A549 (cell line): ENCODE measurements at regions of chr13 and their contacts with region 1.

Region 1: GRCh38 chr13:23466144-23467002 is 32.9 kb upstream of the SACS start:
- DNase-seq: peak; percentile 41 to 76
- ATAC-seq: peak; percentile 94 to 95
- H3K4me3 ChIP-seq: peak overlapping the region; percentile 49
- H3K27ac ChIP-seq: peak overlapping the region; percentile 79 to 91
- H3K4me1 ChIP-seq: 0 out of 3 replicates have a peak, but pooled peaks cover 3% of the 10 kb centered on the region
- CTCF ChIP-seq: peak; percentile 50
- EP300 ChIP-seq: no peak
- POLR2A ChIP-seq: no peak
- RAD21 ChIP-seq: peak; percentile 69 to 74

Region 2: GRCh38 chr13:23330356-23330755 is 136.0 kb before region 1 on chr13:
- CTCF ChIA-PET with region 1: no interaction called
- POLR2A ChIA-PET with region 1: no interaction called
- DNase-seq: no peak
- ATAC-seq: no peak
- H3K4me3 ChIP-seq: no peak overlapping the region
- H3K27ac ChIP-seq: no peak overlapping the region
- H3K4me1 ChIP-seq: no peaks in the 10 kb centered on the region
- CTCF ChIP-seq: no peak
- EP300 ChIP-seq: no peak
- POLR2A ChIP-seq: no peak
- RAD21 ChIP-seq: no peak

Region 3: GRCh38 chr13:23447927-23448326 is 18.4 kb before region 1 on chr13:
- CTCF ChIA-PET with region 1: no interaction called
- POLR2A ChIA-PET with region 1: no interaction called
- DNase-seq: no peak
- ATAC-seq: no peak
- H3K4me3 ChIP-seq: no peak overlapping the region
- H3K27ac ChIP-seq: no peak overlapping the region
- H3K4me1 ChIP-seq: no peaks in the 10 kb centered on the region
- CTCF ChIP-seq: no peak
- EP300 ChIP-seq: no peak
- POLR2A ChIP-seq: no peak
- RAD21 ChIP-seq: no peak

Region 4: DNA sequence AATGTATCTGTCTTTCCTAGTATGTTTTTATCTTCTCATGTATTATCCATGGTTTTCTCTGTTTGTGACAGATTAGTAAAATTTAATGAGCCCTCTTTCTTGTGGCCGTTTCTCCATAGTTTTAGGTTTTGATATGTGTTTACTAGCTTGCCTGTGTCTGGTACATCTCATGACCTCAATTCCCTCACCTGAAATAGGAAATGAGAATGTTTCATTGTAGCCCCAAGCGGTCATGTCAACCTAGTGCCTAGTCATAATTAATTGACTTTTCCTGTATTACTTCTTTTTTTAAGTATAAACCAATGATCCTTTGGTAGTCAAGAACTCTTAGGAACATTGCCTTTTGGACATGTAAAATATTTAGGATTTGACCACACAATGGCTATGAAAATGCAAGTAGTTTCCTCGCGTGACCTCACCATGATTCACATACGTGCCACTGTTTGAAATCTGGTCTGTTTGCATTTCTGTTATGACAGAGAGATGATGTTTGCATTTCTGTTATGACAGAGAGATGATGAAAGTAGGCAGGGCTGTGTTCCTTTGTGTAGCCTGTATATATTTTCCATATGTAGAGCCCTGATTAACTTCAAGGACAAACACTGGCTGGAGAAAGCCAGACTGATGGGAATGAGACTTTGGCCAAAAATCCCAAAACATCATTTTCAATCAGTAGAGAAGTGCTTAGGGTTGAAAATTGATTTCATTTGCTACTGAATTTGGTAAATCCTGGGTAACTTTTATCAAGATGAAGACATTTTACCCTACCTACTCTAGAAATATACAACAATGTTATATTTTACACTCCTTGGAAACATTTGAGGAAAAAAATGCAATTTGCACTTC is 208.6 kb after region 1 on chr13:
- CTCF ChIA-PET with region 1: no interaction called
- POLR2A ChIA-PET with region 1: no interaction called
- DNase-seq: peak; percentile 57 to 60
- ATAC-seq: peak; percentile 73 to 90; a peak in 5 of 6 replicates
- H3K4me3 ChIP-seq: no peak overlapping the region
- H3K27ac ChIP-seq: peak overlapping the region; percentile 38 to 56; a peak in 1 of 6 replicates
- H3K4me1 ChIP-seq: peaks cover 46% of the 10 kb centered on the region
- CTCF ChIP-seq: no peak
- EP300 ChIP-seq: 0 out of 5 replicates have a peak, but pooled peaks of 1 of the 2 experiments have one; percentile 25
- POLR2A ChIP-seq: no peak
- RAD21 ChIP-seq: no peak

Region 5: DNA sequence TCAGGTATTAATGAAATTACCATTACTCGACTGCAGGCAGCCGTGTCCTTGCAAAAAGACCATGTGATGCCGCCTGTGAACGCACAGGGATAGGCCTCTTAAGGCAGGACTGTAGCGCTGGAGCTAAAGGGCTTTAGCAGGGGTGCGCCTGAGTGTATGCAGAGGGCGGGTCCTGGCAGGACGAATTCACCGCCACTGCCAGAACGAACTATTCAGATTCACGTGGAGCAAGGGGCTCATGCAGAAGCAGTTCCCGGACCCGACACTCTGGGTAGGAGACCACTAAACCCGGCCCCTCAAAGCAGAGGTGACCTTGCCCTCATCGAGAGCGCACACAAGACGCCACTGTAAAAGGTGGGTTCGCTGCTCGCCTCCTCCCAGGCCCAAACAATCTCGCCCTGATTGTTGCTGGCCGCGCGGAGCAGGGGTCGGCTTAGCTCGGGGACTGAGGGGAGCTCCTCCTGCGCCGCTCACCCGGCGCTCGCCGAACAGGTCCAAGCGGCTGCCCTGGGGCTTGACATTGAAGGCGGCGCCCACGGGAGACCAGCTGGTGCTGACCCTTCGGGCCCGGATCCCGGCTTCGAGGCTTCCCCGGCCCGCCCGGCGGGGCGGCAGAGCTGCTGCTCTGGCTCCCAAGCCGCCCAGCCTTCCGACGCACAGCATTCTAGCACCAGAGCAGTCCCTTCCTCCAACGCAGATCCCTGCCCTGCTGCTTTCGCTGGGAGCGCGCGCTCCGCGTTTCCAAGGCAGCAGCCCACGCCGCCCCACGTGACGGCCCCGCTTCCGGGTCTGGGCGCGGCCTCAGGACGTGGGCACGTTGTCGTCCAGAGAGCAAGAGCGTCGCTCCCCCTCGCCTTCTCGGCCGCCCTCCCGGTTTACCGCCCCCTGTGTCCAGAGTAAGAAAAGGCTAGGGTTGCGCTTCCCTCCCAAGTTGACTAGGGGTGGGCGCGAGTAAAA is 422.6 kb after region 1 on chr13 and contains the start of gene MIPEP:
- CTCF ChIA-PET with region 1: interaction called, 22 read pairs
- POLR2A ChIA-PET with region 1: no interaction called
- DNase-seq: peak; percentile 83 to 93
- ATAC-seq: peak; percentile 94 to 96
- H3K4me3 ChIP-seq: peak within 1 kb of the TSS; percentile 82
- H3K27ac ChIP-seq: peak within 1 kb of the TSS; percentile 78 to 94
- H3K4me1 ChIP-seq: peaks cover 6% of the 10 kb centered on the region; the same call in 2 of the 3 replicates
- CTCF ChIP-seq: peak; percentile 54
- EP300 ChIP-seq: no peak
- POLR2A ChIP-seq: peak; percentile 67
- RAD21 ChIP-seq: no peak
- polyA plus RNA-seq, gene MIPEP: 27.5 and 32.8 TPM in 2 replicates

Region 6: GRCh38 chr13:23899555-23899954 is 433.2 kb after region 1 on chr13:
- CTCF ChIA-PET with region 1: interaction called, 10 read pairs
- POLR2A ChIA-PET with region 1: no interaction called
- DNase-seq: peak in 1 of 2 experiments; percentile 4
- ATAC-seq: peak in 1 of 2 experiments; percentile 48; a peak in 1 of 6 replicates
- H3K4me3 ChIP-seq: no peak overlapping the region
- H3K27ac ChIP-seq: no peak overlapping the region
- H3K4me1 ChIP-seq: no peaks in the 10 kb centered on the region
- CTCF ChIP-seq: peak; percentile 43
- EP300 ChIP-seq: no peak
- POLR2A ChIP-seq: no peak
- RAD21 ChIP-seq: peak; percentile 40 to 42; a peak in 3 of 5 replicates

Region 7: GRCh38 chr13:23921451-23921888 is 455.1 kb after region 1 on chr13:
- CTCF ChIA-PET with region 1: no interaction called
- POLR2A ChIA-PET with region 1: no interaction called
- DNase-seq: peak in 1 of 2 experiments; percentile 16
- ATAC-seq: no peak
- H3K4me3 ChIP-seq: no peak overlapping the region
- H3K27ac ChIP-seq: no peak overlapping the region
- H3K4me1 ChIP-seq: no peaks in the 10 kb centered on the region
- CTCF ChIP-seq: peak; percentile 51
- EP300 ChIP-seq: no peak
- POLR2A ChIP-seq: no peak
- RAD21 ChIP-seq: peak; percentile 58 to 60; a peak in 4 of 5 replicates